Naive thymus-derived CD4-positive, alpha-beta T cell (primary cell): ENCODE measurements at regions of chr7 and their contacts with region 1.

Region 1: GRCh38 chr7:43834463-43835251 is 34.7 kb downstream of the MRPS24 start:
- DNase-seq: peak in 8 of 9 donors; percentile 25 to 56 (median 46)
- ATAC-seq: peak; percentile 44
- H3K4me3 ChIP-seq: peak overlapping the region; percentile 79
- H3K4me3 Mint-ChIP-seq: peak overlapping the region; percentile 74 to 96 (median 84)
- H3K27ac ChIP-seq: peak overlapping the region; percentile 33
- H3K27ac Mint-ChIP-seq: peak overlapping the region; percentile 79 to 95 (median 86)
- H3K4me1 ChIP-seq: peaks cover 8 to 15% of the 10 kb centered on the region in 2 donors
- H3K4me1 Mint-ChIP-seq: peaks cover 2 to 27% (median 21%) of the 10 kb centered on the region in 7 donors
- H3K27me3 ChIP-seq: no peaks in the 10 kb centered on the region
- H3K27me3 Mint-ChIP-seq: peaks cover 0 to 6% (median 0%) of the 10 kb centered on the region in 5 donors

Region 2: GRCh38 chr7:41940760-41941343 is 1893.8 kb before region 1 on chr7:
- CTCF ChIA-PET with region 1: interaction called, 8 read pairs
- POLR2A ChIA-PET with region 1: no interaction called
- intact Hi-C with region 1: loop called (anchors 1 to 2 kb)
- DNase-seq: peak in 8 of 9 donors; percentile 14 to 53 (median 36)
- ATAC-seq: peak; percentile 77
- H3K4me3 ChIP-seq: no peak overlapping the region
- H3K4me3 Mint-ChIP-seq: peak overlapping the region in 1 of 10 donors; percentile 23
- H3K27ac ChIP-seq: no peak overlapping the region
- H3K27ac Mint-ChIP-seq: no peak overlapping the region
- H3K4me1 ChIP-seq: no peaks in the 10 kb centered on the region
- H3K4me1 Mint-ChIP-seq: peaks cover 0 to 13% (median 7%) of the 10 kb centered on the region in 7 donors
- H3K27me3 ChIP-seq: no peaks in the 10 kb centered on the region
- H3K27me3 Mint-ChIP-seq: peaks cover 17 to 40% (median 23%) of the 10 kb centered on the region in 5 donors

Region 3: GRCh38 chr7:42876182-42877068 is 958.2 kb before region 1 on chr7:
- CTCF ChIA-PET with region 1: no interaction called
- POLR2A ChIA-PET with region 1: no interaction called
- intact Hi-C with region 1: loop called in 1 of 2 experiments (anchors 2 kb)
- DNase-seq: peak in 8 of 9 donors; percentile 10 to 57 (median 32)
- ATAC-seq: peak; percentile 80
- H3K4me3 ChIP-seq: no peak overlapping the region
- H3K4me3 Mint-ChIP-seq: no peak overlapping the region
- H3K27ac ChIP-seq: no peak overlapping the region
- H3K27ac Mint-ChIP-seq: no peak overlapping the region
- H3K4me1 ChIP-seq: no peaks in the 10 kb centered on the region
- H3K4me1 Mint-ChIP-seq: peaks cover 0 to 3% (median 0%) of the 10 kb centered on the region in 7 donors
- H3K27me3 ChIP-seq: no peaks in the 10 kb centered on the region
- H3K27me3 Mint-ChIP-seq: peaks cover 0 to 11% (median 0%) of the 10 kb centered on the region in 5 donors

Region 4: DNA sequence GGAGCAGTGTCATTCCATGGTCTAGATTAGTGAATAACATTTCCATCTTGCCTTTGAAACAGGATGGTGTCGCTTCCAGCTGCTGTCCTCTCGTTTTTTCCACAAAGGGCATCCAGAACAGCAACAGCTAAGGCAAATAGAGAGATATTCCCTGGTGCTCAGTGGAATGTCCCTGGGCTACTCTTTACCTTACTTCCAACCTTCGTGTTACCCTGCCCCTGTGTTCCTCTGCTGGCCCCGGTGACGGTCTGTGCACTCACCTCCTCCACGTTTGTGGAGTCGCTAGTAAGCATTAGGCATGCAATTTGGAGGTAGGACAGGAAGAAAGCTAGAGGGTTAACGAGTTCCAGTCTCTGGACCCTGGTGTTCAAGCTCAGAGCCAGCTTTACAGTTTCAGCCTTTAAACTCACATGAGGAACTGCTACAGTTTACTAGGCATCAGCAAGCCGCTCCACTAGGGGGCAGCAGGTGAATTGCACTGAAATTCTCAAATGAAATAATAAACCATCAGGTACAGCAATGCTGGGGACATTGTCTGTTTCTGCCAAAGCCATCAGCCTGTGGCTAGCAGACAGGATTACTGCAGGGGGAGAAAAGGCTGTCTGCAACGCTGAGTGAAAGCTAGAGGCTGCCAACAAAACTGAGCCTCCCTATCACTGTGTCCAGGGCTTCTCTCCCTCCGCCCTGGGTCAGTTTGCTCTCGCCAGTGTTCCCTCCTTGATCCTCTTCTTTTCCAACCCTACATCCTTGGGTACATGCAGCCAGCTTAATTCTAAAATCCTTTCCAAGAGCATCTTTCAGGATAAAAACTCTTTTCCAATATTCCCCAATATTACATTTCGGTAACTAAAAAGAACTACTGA is 893.4 kb before region 1 on chr7:
- CTCF ChIA-PET with region 1: interaction called, 5 read pairs
- POLR2A ChIA-PET with region 1: no interaction called
- intact Hi-C with region 1: loop called (anchors 1 kb)
- DNase-seq: peak; percentile 43 to 70 (median 63)
- ATAC-seq: peak; percentile 87
- H3K4me3 ChIP-seq: no peak overlapping the region
- H3K4me3 Mint-ChIP-seq: no peak overlapping the region
- H3K27ac ChIP-seq: no peak overlapping the region
- H3K27ac Mint-ChIP-seq: no peak overlapping the region
- H3K4me1 ChIP-seq: peaks cover 0 to 3% of the 10 kb centered on the region in 2 donors
- H3K4me1 Mint-ChIP-seq: peaks cover 1 to 26% (median 9%) of the 10 kb centered on the region in 7 donors
- H3K27me3 ChIP-seq: no peaks in the 10 kb centered on the region
- H3K27me3 Mint-ChIP-seq: peaks cover 0 to 5% (median 0%) of the 10 kb centered on the region in 5 donors

Region 5: GRCh38 chr7:43454936-43455518 is 379.6 kb before region 1 on chr7:
- CTCF ChIA-PET with region 1: no interaction called
- POLR2A ChIA-PET with region 1: no interaction called
- intact Hi-C with region 1: loop called in 1 of 2 experiments (anchors 10 kb)
- DNase-seq: peak in 1 of 9 donors; percentile 9
- ATAC-seq: peak; percentile 42
- H3K4me3 ChIP-seq: no peak overlapping the region
- H3K4me3 Mint-ChIP-seq: no peak overlapping the region
- H3K27ac ChIP-seq: no peak overlapping the region
- H3K27ac Mint-ChIP-seq: peak overlapping the region in 1 of 9 donors; percentile 20
- H3K4me1 ChIP-seq: no peaks in the 10 kb centered on the region
- H3K4me1 Mint-ChIP-seq: peaks cover 0 to 7% (median 4%) of the 10 kb centered on the region in 7 donors
- H3K27me3 ChIP-seq: no peaks in the 10 kb centered on the region
- H3K27me3 Mint-ChIP-seq: peaks cover 5 to 22% (median 7%) of the 10 kb centered on the region in 5 donors

Region 6: GRCh38 chr7:43721193-43721806 is 113.4 kb before region 1 on chr7:
- CTCF ChIA-PET with region 1: interaction called, 4 read pairs
- POLR2A ChIA-PET with region 1: no interaction called
- intact Hi-C with region 1: loop called (anchors 1 kb)
- DNase-seq: peak in 7 of 9 donors; percentile 44 to 65 (median 54)
- ATAC-seq: peak; percentile 61
- H3K4me3 ChIP-seq: no peak overlapping the region
- H3K4me3 Mint-ChIP-seq: no peak overlapping the region
- H3K27ac ChIP-seq: no peak overlapping the region
- H3K27ac Mint-ChIP-seq: peak overlapping the region in 3 of 9 donors; percentile 18 to 79 (median 77)
- H3K4me1 ChIP-seq: peaks cover 0 to 4% of the 10 kb centered on the region in 2 donors
- H3K4me1 Mint-ChIP-seq: peaks cover 22 to 73% (median 57%) of the 10 kb centered on the region in 7 donors
- H3K27me3 ChIP-seq: no peaks in the 10 kb centered on the region
- H3K27me3 Mint-ChIP-seq: no peaks in the 10 kb centered on the region

Region 7: DNA sequence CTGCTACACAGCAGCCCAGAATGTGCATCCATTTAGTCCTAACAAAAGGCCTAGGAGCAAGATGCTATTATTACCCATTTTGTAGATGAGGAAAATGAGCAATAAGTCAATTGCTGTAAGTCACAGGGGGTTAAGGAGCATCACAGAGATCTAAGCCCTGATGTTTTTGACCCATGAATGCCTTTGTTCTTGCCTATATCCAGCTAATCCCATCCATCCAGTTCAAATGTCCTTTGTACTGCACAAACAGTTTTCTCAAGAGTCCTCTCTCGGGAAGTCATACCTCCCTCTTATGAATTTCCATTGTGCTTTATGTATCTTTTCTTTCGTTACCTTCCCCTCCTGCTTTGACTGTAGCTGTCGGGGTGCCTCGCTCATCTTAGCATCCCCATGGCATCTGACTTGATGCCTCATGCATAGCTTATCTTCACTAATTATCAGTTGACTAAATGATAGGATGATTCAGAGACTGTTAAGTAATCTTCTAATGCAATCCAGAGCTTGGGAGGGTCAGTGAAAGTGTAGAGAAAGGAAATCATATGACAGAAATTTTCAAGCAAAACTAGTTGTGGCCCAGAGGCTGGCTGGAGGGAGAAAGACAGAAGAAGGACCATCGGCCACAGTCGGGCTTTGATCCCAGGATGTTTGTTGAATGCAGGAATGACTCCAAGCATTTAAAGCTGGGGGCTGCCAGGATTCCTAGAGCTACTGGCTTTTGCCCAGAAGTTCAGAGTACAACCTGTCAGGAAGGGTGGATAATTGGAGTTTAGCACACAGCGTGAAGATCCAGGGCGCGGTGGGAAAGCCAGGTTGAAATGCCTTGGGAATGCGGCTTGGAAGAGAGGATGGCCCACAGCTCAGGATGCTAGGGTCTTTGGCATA is 52.7 kb before region 1 on chr7:
- CTCF ChIA-PET with region 1: no interaction called
- POLR2A ChIA-PET with region 1: no interaction called
- intact Hi-C with region 1: no loop called
- DNase-seq: no peak
- ATAC-seq: peak; percentile 71
- H3K4me3 ChIP-seq: no peak overlapping the region
- H3K4me3 Mint-ChIP-seq: no peak overlapping the region
- H3K27ac ChIP-seq: no peak overlapping the region
- H3K27ac Mint-ChIP-seq: no peak overlapping the region
- H3K4me1 ChIP-seq: no peaks in the 10 kb centered on the region
- H3K4me1 Mint-ChIP-seq: peaks cover 6 to 29% (median 16%) of the 10 kb centered on the region in 7 donors
- H3K27me3 ChIP-seq: no peaks in the 10 kb centered on the region
- H3K27me3 Mint-ChIP-seq: no peaks in the 10 kb centered on the region

Region 8: GRCh38 chr7:43869006-43869866 is 34.6 kb after region 1 on chr7 and contains the start of gene MRPS24:
- CTCF ChIA-PET with region 1: interaction called, 6 read pairs
- POLR2A ChIA-PET with region 1: interaction called, 3 read pairs
- intact Hi-C with region 1: loop called (anchors 1 kb)
- DNase-seq: peak; percentile 84 to 95 (median 92)
- ATAC-seq: peak; percentile 100
- H3K4me3 ChIP-seq: peak within 1 kb of the TSS; percentile 92
- H3K4me3 Mint-ChIP-seq: peak within 1 kb of the TSS; percentile 88 to 97 (median 95)
- H3K27ac ChIP-seq: peak within 1 kb of the TSS; percentile 78
- H3K27ac Mint-ChIP-seq: peak within 1 kb of the TSS; percentile 86 to 97 (median 90)
- H3K4me1 ChIP-seq: peaks cover 13 to 15% of the 10 kb centered on the region in 2 donors
- H3K4me1 Mint-ChIP-seq: peaks cover 0 to 24% (median 22%) of the 10 kb centered on the region in 7 donors
- H3K27me3 ChIP-seq: no peaks in the 10 kb centered on the region
- H3K27me3 Mint-ChIP-seq: no peaks in the 10 kb centered on the region
- total RNA-seq, gene MRPS24: 44.2 to 76.6 (median 62.3) TPM

Region 9: DNA sequence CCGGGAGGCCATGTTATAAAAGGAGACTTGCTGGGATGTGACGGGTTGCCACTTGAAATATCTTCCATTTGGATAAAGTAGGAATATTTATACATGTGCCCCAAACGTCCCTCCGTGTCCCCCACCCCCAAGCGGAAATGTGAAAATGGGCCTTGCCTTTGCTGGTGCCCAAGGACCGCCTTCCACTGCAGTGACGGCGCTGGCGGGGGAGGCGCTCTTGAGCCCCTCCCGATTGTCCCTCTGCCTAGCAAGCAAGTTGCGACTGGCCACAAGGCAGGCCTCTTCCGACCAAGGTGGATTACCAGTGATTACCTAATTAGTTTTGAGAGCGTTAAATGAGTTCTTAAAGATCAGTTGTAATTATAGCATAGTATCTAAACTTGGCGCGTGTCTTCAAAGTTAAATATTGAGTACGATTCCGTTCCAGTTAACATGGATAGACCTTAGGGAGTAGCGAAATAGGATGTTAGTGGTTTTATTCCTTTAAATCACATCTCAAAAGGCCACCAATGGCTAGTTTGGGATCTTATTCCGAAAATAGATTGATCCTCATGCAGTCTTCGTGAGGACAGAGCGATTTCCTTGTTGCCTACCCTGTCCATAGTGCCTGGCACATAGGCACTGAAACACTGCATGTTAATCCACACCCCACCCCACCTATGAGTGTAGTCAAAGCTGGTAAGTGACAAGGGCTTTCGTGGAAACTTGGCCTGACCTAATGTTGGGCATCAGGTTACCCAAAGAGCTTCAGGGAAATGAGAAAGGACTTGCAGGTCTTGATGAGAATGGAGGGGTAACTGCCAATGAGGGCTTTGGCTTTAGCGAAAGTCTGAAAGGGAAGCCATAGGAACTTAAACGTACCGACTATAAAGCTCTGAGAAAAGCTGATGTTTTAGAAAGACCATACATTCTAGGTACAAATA is 962.9 kb after region 1 on chr7:
- CTCF ChIA-PET with region 1: no interaction called
- POLR2A ChIA-PET with region 1: no interaction called
- intact Hi-C with region 1: no loop called
- DNase-seq: peak; percentile 65 to 86 (median 80)
- ATAC-seq: peak; percentile 67
- H3K4me3 ChIP-seq: peak overlapping the region; percentile 87
- H3K4me3 Mint-ChIP-seq: peak overlapping the region; percentile 87 to 99 (median 98)
- H3K27ac ChIP-seq: peak overlapping the region; percentile 98
- H3K27ac Mint-ChIP-seq: peak overlapping the region; percentile 90 to 99 (median 97)
- H3K4me1 ChIP-seq: peaks cover 12 to 21% of the 10 kb centered on the region in 2 donors
- H3K4me1 Mint-ChIP-seq: peaks cover 8 to 41% (median 38%) of the 10 kb centered on the region in 7 donors
- H3K27me3 ChIP-seq: no peaks in the 10 kb centered on the region
- H3K27me3 Mint-ChIP-seq: no peaks in the 10 kb centered on the region